Right cardiac atrium (tissue), 5 donors: ENCODE measurements at regions of chr21 and their contacts with region 1.

Region 1: GRCh38 chr21:38805328-38806152 is at the start of gene ETS2:
- DNase-seq: peak; percentile 93 to 96 (median 96)
- ATAC-seq: peak; percentile 93 to 94
- H3K4me3 ChIP-seq: peak within 1 kb of the TSS; percentile 89
- H3K27ac ChIP-seq: peak within 1 kb of the TSS; percentile 68
- H3K4me1 ChIP-seq: peaks cover 5% of the 10 kb centered on the region
- H3K27me3 ChIP-seq: no peaks in the 10 kb centered on the region
- total RNA-seq, gene ETS2: 40.4 to 76.3 (median 44.8) TPM

Region 2: GRCh38 chr21:38755681-38756371 is 49.7 kb before region 1 on chr21:
- intact Hi-C with region 1: loop called in 1 of 4 experiments (anchors 5 kb)
- DNase-seq: peak in 2 of 3 donors; percentile 59 to 73
- ATAC-seq: peak; percentile 60 to 72
- H3K4me3 ChIP-seq: no peak overlapping the region
- H3K27ac ChIP-seq: peak overlapping the region; percentile 38
- H3K4me1 ChIP-seq: no peaks in the 10 kb centered on the region
- H3K27me3 ChIP-seq: no peaks in the 10 kb centered on the region

Region 3: GRCh38 chr21:38897532-38898422 is 92.2 kb after region 1 on chr21:
- intact Hi-C with region 1: loop called in 1 of 4 experiments (anchors 5 kb)
- DNase-seq: no peak
- ATAC-seq: peak in 1 of 2 donors; percentile 31
- H3K4me3 ChIP-seq: no peak overlapping the region
- H3K27ac ChIP-seq: no peak overlapping the region
- H3K4me1 ChIP-seq: no peaks in the 10 kb centered on the region
- H3K27me3 ChIP-seq: no peaks in the 10 kb centered on the region

Region 4: GRCh38 chr21:38989745-38990423 is 184.3 kb after region 1 on chr21:
- intact Hi-C with region 1: loop called in 1 of 4 experiments (anchors 10 kb)
- DNase-seq: peak in 2 of 3 donors; percentile 74 to 79
- ATAC-seq: peak; percentile 19 to 35
- H3K4me3 ChIP-seq: no peak overlapping the region
- H3K27ac ChIP-seq: peak overlapping the region; percentile 11
- H3K4me1 ChIP-seq: peaks cover 21% of the 10 kb centered on the region
- H3K27me3 ChIP-seq: no peaks in the 10 kb centered on the region

Region 5: GRCh38 chr21:39066829-39067780 is 261.6 kb after region 1 on chr21:
- intact Hi-C with region 1: loop called in 1 of 4 experiments (anchors 5 kb)
- DNase-seq: peak in 1 of 3 donors; percentile 67
- ATAC-seq: peak; percentile 78 to 91
- H3K4me3 ChIP-seq: no peak overlapping the region
- H3K27ac ChIP-seq: peak overlapping the region; percentile 75
- H3K4me1 ChIP-seq: peaks cover 4% of the 10 kb centered on the region
- H3K27me3 ChIP-seq: no peaks in the 10 kb centered on the region